Head of caudate nucleus (tissue), 42 donors: ENCODE measurements at regions of chr11 and their contacts with region 1.

Region 1: GRCh38 chr11:8911029-8911826 is at the start of gene AKIP1:
- DNase-seq: peak; percentile 84 to 98 (median 96)

Region 2: GRCh38 chr11:8688414-8689362 is 222.5 kb before region 1 on chr11:
- intact Hi-C with region 1: loop called (anchors 5 kb)
- DNase-seq: peak; percentile 78 to 98 (median 94)

Region 3: DNA sequence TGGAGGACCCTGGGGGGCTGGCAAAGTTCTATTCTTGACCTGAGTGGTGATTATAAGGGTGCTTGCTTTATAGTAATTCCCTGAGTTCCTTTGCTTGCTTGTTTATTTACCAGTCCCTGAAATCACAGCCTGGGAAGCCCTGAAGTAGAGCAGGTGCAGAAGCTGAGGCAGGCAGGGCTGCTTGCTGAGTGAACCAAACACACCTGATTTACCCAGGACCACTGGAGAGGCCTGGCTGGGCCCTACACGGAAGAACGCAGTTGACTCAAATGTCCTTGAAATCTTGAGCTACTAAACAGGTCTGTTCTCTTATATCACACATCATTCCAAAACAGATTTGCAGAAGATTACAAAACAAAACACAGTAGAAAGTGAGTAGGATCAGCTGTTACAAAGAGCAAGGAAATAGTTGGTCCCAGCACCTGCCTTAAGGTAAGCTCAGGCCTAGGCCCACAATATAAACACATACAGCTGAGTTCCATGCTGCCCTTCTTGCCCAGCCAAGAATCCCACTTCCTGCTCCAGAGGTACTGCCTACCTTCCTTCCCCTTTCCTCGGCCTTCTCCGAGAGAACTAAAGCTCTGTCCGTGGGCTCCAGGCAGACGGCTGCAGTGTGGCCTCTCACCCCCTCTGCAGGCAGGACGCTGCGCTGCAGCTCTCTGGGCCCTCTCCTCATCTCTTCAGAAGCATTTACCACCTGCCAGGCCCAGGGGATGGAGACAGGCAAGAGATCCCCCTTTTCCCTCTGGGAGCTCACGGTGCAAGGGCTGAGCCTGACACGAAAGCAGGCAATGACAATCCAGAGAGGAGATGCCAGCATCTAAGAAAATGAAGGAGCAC is 226.3 kb after region 1 on chr11:
- intact Hi-C with region 1: loop called (anchors 10 kb)
- DNase-seq: peak; percentile 62 to 90 (median 80)